Gastrocnemius medialis (tissue), 4 donors: ENCODE measurements at regions of chr19 and their contacts with region 1.

Region 1: GRCh38 chr19:48152551-48152950 is 17.6 kb downstream of the LIG1 start:
- DNase-seq: peak; percentile 12 to 42
- ATAC-seq: peak; percentile 41 to 83
- H3K4me3 ChIP-seq: no peak overlapping the region
- H3K27ac ChIP-seq: no peak overlapping the region
- H3K4me1 ChIP-seq: no peaks in the 10 kb centered on the region
- H3K27me3 ChIP-seq: no peaks in the 10 kb centered on the region
- CTCF ChIP-seq: peak; percentile 85 to 93 (median 88)
- POLR2A ChIP-seq: no peak

Region 2: DNA sequence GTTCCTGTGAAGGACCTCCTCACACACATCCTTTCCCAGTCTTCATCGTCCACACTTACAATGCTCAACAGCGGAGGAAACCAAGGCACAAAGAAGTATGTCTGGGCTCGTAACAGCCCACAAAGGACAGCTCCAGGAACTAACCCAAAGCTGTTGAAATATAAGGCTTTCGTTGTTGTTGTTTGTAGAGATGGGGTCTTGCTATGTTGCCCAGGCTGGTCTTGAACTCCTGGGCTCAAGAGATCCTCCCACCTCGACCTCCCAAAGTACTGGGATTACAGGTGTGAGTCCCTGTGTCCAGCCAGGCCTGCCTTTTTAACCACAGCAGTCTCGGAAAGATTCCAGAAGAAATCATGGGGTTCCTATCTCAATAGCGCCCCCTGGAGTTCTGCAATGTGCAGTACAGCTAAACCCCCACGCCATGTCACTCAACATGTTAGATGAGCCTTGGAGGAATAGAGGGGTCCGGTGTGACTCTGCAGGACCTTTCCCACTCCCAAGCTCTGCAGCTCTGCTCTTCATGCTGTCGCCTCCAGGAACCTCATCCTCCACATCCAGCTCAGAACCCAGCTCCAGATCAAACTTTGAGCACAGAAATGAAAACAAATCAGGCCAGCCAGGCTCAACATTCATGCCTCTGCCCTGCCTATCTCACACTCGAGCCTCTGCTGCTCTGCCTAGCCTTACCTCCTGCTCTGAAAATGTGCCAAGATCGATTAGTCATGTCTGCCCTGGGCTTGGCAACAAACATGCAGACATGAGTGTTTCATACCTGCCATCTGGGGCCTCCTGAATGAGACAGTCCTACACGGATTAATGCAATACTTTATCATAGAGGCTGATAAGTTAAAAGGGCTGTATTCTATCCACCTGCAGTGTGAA is 49.4 kb before region 1 on chr19:
- in situ Hi-C with region 1: loop called (anchors 5 to 10 kb)
- intact Hi-C with region 1: loop called (anchors 1 kb)
- DNase-seq: peak in 1 of 2 donors; percentile 27
- ATAC-seq: no peak
- H3K4me3 ChIP-seq: no peak overlapping the region
- H3K27ac ChIP-seq: no peak overlapping the region
- H3K4me1 ChIP-seq: peaks cover 7 to 15% of the 10 kb centered on the region in 2 donors
- H3K27me3 ChIP-seq: no peaks in the 10 kb centered on the region
- CTCF ChIP-seq: peak; percentile 25 to 60 (median 35)
- POLR2A ChIP-seq: no peak

Region 3: DNA sequence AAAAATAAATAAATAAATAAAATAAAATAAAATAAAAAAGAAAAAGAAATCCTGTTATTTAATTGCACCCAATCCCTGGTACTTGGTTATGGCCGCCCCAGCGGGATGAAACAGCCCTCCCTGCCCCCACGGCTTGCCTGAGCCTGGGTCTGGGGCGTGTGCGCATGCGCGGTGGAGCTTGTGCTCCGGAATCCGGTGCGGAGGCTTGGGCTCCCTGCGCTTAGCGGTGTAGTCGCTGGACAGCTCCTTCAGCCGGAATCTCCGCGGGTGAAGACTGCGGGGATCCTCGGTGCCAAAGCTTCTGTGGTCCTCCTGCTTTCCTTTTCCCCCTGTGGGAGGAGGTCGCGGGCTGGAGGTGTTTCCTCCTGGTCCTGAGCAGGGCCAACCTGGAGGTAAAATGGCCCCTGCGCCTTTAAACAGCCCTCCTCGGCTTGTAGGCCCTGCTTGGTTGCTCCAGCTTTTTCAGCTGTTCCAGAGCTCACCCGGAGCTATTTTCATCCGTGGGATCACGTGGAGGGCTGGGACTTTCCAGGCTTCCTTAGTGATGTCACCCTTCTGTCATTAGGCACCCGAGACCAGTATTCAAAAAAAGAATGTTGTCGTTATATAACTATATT is 42.1 kb before region 1 on chr19 and contains the start of gene PLA2G4C:
- in situ Hi-C with region 1: loop called (anchors 5 to 10 kb)
- intact Hi-C with region 1: loop called (anchors 1 kb)
- DNase-seq: peak; percentile 84 to 96
- ATAC-seq: peak; percentile 93 to 97
- H3K4me3 ChIP-seq: peak within 1 kb of the TSS; percentile 55 to 66 (median 63)
- H3K27ac ChIP-seq: peak within 1 kb of the TSS; percentile 90 to 99 (median 96)
- H3K4me1 ChIP-seq: peaks cover 25 to 34% of the 10 kb centered on the region in 2 donors
- H3K27me3 ChIP-seq: no peaks in the 10 kb centered on the region
- CTCF ChIP-seq: no peak
- POLR2A ChIP-seq: peak; percentile 92
- total RNA-seq, gene PLA2G4C: 25.7 to 61.1 (median 51.1) TPM